ENCODE measurements at regions of chr1 and their contacts with region 1.

Region 1: DNA sequence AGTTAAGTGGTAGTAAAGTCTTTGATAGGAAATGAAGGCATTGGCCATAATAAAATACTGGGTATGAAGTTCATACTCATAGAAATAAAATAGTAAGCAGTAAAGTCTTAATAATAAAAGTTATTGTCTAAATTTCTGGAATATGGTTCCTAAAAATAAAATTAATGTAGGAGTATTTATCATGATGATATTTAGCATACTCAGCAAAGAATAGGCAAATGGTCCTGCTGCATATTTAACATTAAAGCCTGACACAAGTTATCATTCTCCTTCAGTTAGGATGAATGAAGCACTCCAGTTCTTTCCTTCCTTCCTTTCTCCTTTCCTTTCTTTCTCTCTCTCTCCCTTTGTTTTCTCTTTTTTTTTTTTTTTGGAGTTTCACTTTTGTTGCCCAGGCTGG is 25.3 kb downstream of the PDZK1IP1 start:
- DNase-seq: no peak
- H3K4me3 ChIP-seq: no peak overlapping the region
- H3K27ac ChIP-seq: no peak overlapping the region
- H3K27me3 ChIP-seq: peaks cover 2% of the 10 kb centered on the region
- CTCF ChIP-seq: no peak

Region 2: DNA sequence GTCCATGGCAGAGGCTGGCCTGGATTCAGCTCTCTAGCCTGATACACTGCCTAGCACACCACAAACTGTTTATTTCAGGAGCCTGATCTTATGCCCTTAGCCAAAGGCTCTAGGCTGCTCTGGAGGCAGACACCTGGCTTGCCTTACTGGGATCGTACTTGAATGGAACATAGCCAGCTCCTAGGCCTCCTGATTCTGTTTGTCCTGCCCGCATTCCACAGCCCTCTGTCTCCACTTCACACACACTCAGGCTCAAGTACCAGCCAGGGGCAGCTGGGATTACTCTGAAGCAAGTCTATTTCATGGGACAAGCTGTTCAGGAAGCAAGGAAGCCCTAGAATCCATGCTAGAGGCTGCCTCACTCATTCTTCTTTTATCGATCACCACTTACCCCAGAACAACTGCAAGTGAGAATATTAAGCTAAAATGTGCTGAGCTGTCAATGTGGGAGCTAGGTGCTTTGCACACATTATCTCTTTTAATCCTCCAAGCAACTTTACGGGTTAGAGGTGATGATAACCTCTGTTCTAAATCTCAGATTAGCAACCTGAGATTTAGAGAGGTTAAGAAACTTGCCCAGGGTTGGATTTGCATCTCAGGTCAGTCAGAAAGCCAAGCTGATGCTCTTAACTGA is 396.8 kb before region 1 on chr1:
- CTCF ChIA-PET with region 1: no interaction called
- POLR2A ChIA-PET with region 1: interaction called, 10 read pairs
- DNase-seq: no peak
- H3K4me3 ChIP-seq: no peak overlapping the region
- H3K27ac ChIP-seq: no peak overlapping the region
- H3K27me3 ChIP-seq: no peaks in the 10 kb centered on the region
- CTCF ChIP-seq: no peak

Region 3: GRCh38 chr1:47147047-47147785 is 17.3 kb before region 1 on chr1:
- CTCF ChIA-PET with region 1: no interaction called
- POLR2A ChIA-PET with region 1: no interaction called
- DNase-seq: no peak
- H3K4me3 ChIP-seq: no peak overlapping the region
- H3K27ac ChIP-seq: no peak overlapping the region
- H3K27me3 ChIP-seq: no peaks in the 10 kb centered on the region
- CTCF ChIP-seq: no peak

Region 4: DNA sequence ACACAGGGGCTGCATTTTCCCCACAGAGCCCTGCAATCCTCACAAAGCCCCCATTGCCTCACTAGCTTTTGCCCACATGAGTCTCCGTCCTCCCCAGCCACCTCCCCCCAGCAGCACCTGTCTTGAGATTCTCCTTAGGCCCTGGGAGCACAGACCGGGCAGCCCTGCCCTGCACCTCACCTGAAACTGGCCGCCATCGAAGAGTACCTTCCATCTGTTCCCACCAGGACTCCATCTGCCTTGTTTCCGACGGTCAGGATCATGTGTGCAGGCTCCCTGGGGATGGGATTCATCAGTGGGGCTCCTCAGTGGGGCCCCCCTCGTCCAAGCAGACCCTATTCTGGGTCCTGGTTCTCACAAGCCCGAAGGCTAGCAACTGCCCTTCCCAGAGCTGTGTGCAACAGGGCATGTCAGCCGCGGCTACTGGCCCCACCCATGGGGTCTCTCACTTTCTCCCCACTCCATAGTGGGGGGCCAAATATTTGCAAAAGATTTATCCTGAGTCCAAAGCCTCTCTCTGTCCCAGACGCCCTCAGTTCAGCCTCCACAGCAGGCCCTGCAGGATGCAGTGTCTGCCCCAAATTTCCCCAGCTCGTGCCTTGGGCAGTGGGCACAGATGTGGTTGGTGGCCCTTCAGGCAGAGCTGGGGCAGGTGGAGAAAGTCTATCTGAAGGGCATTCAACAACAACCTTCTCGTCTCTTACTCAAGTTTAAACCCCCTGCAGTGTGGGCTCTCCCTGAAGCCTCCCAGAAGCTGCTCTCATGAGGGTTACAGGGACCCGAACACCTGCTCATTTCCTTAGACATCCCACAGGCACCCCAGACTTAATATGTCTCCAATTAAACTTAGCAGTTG is 20.5 kb after region 1 on chr1:
- CTCF ChIA-PET with region 1: no interaction called
- POLR2A ChIA-PET with region 1: no interaction called
- DNase-seq: no peak
- H3K4me3 ChIP-seq: no peak overlapping the region
- H3K27ac ChIP-seq: no peak overlapping the region
- H3K27me3 ChIP-seq: peaks cover 4% of the 10 kb centered on the region
- CTCF ChIP-seq: no peak